ENCODE measurements at regions of chr1 and their contacts with region 1.

Region 1: DNA sequence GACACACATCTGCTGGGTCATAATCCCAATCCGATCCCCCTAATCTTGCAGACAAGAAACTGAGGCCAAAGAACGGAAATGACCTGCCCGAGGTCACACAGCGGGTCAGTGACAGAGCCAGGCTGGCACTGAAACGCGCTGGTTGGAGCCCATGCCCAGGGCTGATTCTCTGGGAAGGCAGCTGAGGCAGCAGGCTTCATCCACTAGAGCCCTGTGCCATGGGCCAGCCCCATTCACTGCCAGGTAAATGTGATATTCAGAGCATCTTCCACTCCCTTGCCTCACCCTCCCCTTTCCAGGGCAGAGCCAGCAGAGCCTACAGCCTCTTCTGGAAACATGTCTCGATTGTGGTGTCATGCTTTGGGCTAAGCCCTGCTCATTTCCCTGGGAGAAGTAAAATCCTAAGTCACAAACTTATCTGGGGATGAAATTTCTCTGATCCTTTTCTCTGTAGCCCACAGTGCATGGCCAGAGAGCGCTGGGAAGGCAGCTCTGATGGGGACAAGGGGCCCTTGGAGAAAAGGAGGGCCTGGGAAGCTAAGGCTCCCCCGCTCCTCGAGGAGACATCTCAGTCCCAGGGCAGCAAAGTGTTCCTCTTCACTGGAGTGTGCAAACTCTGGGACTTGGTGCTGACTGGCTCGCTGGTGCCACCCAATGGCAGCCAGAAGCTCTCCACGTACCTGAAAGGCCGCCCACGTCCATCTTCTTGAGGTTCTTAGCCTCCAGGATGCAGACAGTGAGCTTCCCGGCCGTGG is 110.4 kb downstream of the SYT2 start:
- DNase-seq: peak; percentile 56 to 76
- H3K4me3 ChIP-seq: no peak overlapping the region
- H3K27ac ChIP-seq: no peak overlapping the region
- H3K4me1 ChIP-seq: no peaks in the 10 kb centered on the region
- H3K27me3 ChIP-seq: no peaks in the 10 kb centered on the region
- CTCF ChIP-seq: peak; percentile 83

Region 2: GRCh38 chr1:202184750-202185460 is 414.9 kb before region 1 on chr1:
- CTCF ChIA-PET with region 1: no interaction called
- POLR2A ChIA-PET with region 1: no interaction called
- intact Hi-C with region 1: loop called (anchors 5 kb)
- DNase-seq: peak; percentile 81 to 84
- H3K4me3 ChIP-seq: no peak overlapping the region
- H3K27ac ChIP-seq: no peak overlapping the region
- H3K4me1 ChIP-seq: no peaks in the 10 kb centered on the region
- H3K27me3 ChIP-seq: peaks cover 5% of the 10 kb centered on the region; the same call in 1 of the 2 replicates
- CTCF ChIP-seq: peak; percentile 85

Region 3: GRCh38 chr1:202501281-202501680 is 98.6 kb before region 1 on chr1:
- CTCF ChIA-PET with region 1: interaction called, 3 read pairs
- POLR2A ChIA-PET with region 1: no interaction called
- intact Hi-C with region 1: loop called (anchors 1 kb)
- DNase-seq: peak in 1 of 2 experiments; percentile 3
- H3K4me3 ChIP-seq: no peak overlapping the region
- H3K27ac ChIP-seq: no peak overlapping the region
- H3K4me1 ChIP-seq: no peaks in the 10 kb centered on the region
- H3K27me3 ChIP-seq: no peaks in the 10 kb centered on the region
- CTCF ChIP-seq: peak; percentile 68

Region 4: DNA sequence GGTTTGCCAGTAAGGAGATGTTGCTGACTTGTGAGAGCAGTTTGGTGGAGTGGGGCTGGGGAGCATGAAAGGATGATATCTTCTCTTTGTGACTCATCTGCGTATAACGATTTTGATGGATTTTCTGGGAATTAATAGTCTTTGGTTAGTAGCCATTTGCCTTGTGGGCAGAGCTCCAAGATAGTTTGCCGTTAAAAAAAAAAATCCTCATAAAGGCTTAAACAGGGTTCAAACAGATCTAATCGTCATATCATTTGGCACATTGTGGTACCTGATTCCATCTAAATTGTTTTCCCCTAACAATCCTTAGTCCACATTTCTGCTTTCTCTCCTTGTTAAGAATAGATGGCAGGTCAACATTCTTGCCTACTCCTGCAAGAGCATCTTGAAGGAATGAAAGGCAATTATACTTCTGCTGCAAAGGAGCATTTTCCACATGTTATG is 83.4 kb before region 1 on chr1:
- CTCF ChIA-PET with region 1: no interaction called
- POLR2A ChIA-PET with region 1: interaction called, 10 read pairs
- intact Hi-C with region 1: no loop called
- DNase-seq: no peak
- H3K4me3 ChIP-seq: no peak overlapping the region
- H3K27ac ChIP-seq: no peak overlapping the region
- H3K4me1 ChIP-seq: no peaks in the 10 kb centered on the region
- H3K27me3 ChIP-seq: no peaks in the 10 kb centered on the region
- CTCF ChIP-seq: no peak

Region 5: GRCh38 chr1:202633384-202633783 is 33.5 kb after region 1 on chr1:
- CTCF ChIA-PET with region 1: no interaction called
- POLR2A ChIA-PET with region 1: no interaction called
- intact Hi-C with region 1: no loop called
- DNase-seq: no peak
- H3K4me3 ChIP-seq: no peak overlapping the region
- H3K27ac ChIP-seq: no peak overlapping the region
- H3K4me1 ChIP-seq: no peaks in the 10 kb centered on the region
- H3K27me3 ChIP-seq: peaks cover 39% of the 10 kb centered on the region
- CTCF ChIP-seq: no peak

Measured in PC-9 (cell line).